CD4-positive, alpha-beta memory T cell (primary cell): ENCODE measurements at regions of chr5 and their contacts with region 1.

Region 1: DNA sequence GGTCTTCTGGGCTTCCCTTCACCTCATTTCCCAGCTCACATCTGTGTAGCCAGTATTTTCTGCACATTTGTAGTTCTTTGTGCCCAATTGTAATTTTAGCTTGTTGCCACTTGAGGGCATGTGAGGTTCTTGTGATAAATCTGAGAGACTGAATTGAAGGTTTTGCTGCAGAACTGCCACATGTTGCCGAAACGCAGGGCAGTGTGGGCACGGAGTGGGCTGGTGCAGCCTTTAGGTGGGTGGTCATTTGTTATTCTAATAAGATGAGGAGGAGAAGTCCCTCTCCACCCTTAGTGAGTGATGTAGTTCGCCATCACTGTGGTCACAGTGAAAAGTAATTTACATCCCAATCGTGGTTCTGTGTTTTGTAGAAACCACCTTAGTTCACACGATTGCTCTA is 21.2 kb downstream of the OTULIN start:
- DNase-seq: peak; percentile 52 to 63 (median 57)
- H3K4me3 ChIP-seq: no peak overlapping the region
- H3K4me3 Mint-ChIP-seq: peak overlapping the region; percentile 38 to 86 (median 67)
- H3K27ac ChIP-seq: no peak overlapping the region
- H3K27ac Mint-ChIP-seq: peak overlapping the region in 6 of 7 donors; percentile 8 to 97 (median 64)
- H3K4me1 ChIP-seq: peaks cover 7% of the 10 kb centered on the region
- H3K4me1 Mint-ChIP-seq: peaks cover 7 to 12% (median 11%) of the 10 kb centered on the region in 4 donors
- H3K27me3 ChIP-seq: no peaks in the 10 kb centered on the region
- H3K27me3 Mint-ChIP-seq: no peaks in the 10 kb centered on the region

Region 2: GRCh38 chr5:14491015-14491915 is 194.5 kb before region 1 on chr5:
- CTCF ChIA-PET with region 1: no interaction called
- POLR2A ChIA-PET with region 1: no interaction called
- intact Hi-C with region 1: no loop called
- DNase-seq: no peak
- H3K4me3 ChIP-seq: no peak overlapping the region
- H3K4me3 Mint-ChIP-seq: no peak overlapping the region
- H3K27ac ChIP-seq: no peak overlapping the region
- H3K27ac Mint-ChIP-seq: no peak overlapping the region
- H3K4me1 ChIP-seq: no peaks in the 10 kb centered on the region
- H3K4me1 Mint-ChIP-seq: no peaks in the 10 kb centered on the region
- H3K27me3 ChIP-seq: no peaks in the 10 kb centered on the region
- H3K27me3 Mint-ChIP-seq: no peaks in the 10 kb centered on the region

Region 3: DNA sequence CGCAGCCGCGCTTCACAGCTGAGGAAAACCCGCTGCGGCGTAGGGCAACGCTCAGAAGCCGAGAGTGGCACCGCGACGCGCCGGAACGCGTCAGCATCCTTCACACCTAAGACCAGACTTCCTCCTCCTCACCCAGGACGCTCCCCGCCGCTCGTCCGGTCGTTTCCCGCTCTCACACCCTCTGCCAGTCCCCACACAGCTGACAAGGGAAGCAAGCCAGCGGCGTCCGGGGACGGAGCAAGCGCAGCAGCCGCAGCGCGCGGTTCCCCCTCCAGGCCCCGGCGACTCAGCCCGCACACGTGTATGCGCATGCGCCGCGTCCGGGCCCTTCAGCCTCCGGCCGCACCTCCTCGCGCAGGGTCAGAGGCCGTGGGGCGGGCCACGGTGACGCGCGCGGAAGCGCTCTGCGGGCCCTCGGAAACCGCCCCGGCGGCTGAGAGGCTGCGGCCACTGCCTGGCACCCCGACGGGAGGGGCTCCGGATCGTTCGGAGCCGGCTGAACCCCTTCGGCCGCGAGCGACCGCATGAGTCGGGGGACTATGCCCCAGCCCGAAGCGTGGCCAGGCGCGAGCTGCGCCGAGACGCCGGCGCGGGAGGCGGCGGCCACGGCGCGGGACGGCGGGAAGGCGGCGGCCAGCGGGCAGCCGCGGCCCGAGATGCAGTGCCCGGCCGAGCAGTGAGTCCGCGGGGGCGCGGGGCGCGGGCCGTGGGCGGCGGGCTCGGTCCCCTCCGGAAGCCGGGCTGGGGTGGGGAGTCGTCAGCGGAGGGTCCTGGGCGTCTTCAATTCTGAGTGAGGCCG is 21.3 kb before region 1 on chr5 and contains the start of gene OTULIN:
- CTCF ChIA-PET with region 1: interaction called, 15 read pairs
- POLR2A ChIA-PET with region 1: interaction called, 5 read pairs
- intact Hi-C with region 1: no loop called
- DNase-seq: peak; percentile 82 to 92 (median 84)
- H3K4me3 ChIP-seq: peak within 1 kb of the TSS; percentile 54 to 80
- H3K4me3 Mint-ChIP-seq: peak within 1 kb of the TSS; percentile 94 to 98 (median 96)
- H3K27ac ChIP-seq: peak within 1 kb of the TSS; percentile 81
- H3K27ac Mint-ChIP-seq: peak within 1 kb of the TSS; percentile 89 to 99 (median 96)
- H3K4me1 ChIP-seq: peaks cover 61% of the 10 kb centered on the region
- H3K4me1 Mint-ChIP-seq: peaks cover 44 to 76% (median 56%) of the 10 kb centered on the region in 4 donors
- H3K27me3 ChIP-seq: no peaks in the 10 kb centered on the region
- H3K27me3 Mint-ChIP-seq: no peaks in the 10 kb centered on the region
- total RNA-seq, gene OTULIN: 59.4 to 69.0 TPM

Region 4: DNA sequence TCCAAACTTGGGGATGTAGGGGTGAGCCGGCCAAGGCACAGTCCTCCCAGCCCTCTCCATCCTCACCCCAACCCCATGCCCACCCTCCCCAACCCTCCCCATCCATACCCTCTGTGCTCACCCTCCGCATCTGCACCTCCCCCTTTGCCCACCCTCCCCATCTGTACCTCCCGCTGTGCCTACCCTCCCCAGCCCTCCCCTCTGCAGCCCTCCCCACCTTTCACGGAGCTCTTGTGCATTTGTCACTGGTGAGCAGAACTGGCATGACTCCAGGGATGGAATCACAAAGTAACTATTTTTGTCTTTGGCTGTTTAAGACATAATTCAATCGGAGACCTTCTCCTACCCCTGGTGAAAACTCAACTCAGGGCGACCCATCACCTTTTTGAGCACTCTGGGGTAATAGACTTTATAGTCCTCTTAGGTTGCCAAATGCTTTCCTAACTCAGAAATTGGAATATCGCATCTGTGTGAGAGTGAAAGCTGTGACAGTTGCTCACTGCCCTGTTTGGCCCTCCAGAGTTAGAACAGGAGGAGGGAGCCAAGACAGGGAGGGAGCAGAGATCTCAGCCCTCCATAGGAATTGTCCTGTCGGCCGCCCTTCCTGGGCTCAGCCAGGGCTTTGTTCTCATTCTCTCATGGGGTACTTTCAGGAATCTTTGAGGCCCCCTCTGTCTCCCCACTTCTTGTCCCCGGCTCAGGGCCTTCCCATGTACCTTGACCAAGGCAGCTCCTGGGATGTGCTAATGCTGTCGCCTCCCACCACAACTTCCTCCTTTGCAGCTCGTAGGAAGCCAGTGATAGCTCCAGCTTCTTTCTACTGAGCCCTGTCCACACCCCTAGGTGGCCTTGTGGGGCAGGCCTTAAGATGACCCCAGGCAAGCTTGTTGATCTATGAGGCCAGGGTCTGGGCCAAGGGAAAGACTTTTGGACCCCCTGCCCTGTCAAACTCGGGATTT is 15.0 kb after region 1 on chr5:
- CTCF ChIA-PET with region 1: interaction called, 114 read pairs
- POLR2A ChIA-PET with region 1: interaction called, 3 read pairs
- intact Hi-C with region 1: no loop called
- DNase-seq: no peak
- H3K4me3 ChIP-seq: no peak overlapping the region
- H3K4me3 Mint-ChIP-seq: peak overlapping the region in 4 of 8 donors; percentile 12 to 54 (median 35)
- H3K27ac ChIP-seq: peak overlapping the region; percentile 7
- H3K27ac Mint-ChIP-seq: peak overlapping the region; percentile 79 to 99 (median 94)
- H3K4me1 ChIP-seq: peaks cover 59% of the 10 kb centered on the region
- H3K4me1 Mint-ChIP-seq: peaks cover 53 to 91% (median 63%) of the 10 kb centered on the region in 4 donors
- H3K27me3 ChIP-seq: no peaks in the 10 kb centered on the region
- H3K27me3 Mint-ChIP-seq: no peaks in the 10 kb centered on the region

Region 5: DNA sequence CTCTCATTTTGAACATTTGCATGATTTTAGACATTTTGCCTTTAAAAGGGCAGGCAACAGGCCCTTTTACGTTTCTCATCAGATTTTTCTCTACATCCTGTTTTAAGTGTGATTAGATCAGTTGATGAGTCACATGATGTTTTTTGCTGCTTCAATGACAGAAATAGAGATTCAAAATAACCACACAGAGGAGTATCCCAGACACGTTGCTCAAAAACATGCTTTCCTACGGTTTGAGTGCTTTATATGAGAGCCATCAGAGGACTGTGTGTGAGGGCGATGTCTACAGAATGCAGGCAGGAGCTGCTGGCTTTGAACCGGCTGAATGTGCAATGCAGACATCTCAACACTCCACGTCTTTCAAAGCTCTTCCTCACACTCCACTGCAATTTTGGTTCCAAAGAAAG is 20.9 kb after region 1 on chr5:
- CTCF ChIA-PET with region 1: interaction called, 114 read pairs
- POLR2A ChIA-PET with region 1: interaction called, 12 read pairs
- intact Hi-C with region 1: loop called (anchors 1 kb)
- DNase-seq: peak; percentile 67 to 80 (median 73)
- H3K4me3 ChIP-seq: peak overlapping the region in 1 of 2 donors; percentile 26
- H3K4me3 Mint-ChIP-seq: peak overlapping the region; percentile 81 to 90 (median 82)
- H3K27ac ChIP-seq: peak overlapping the region; percentile 49
- H3K27ac Mint-ChIP-seq: peak overlapping the region; percentile 94 to 99 (median 99)
- H3K4me1 ChIP-seq: peaks cover 76% of the 10 kb centered on the region
- H3K4me1 Mint-ChIP-seq: peaks cover 66 to 91% (median 80%) of the 10 kb centered on the region in 4 donors
- H3K27me3 ChIP-seq: no peaks in the 10 kb centered on the region
- H3K27me3 Mint-ChIP-seq: no peaks in the 10 kb centered on the region

Region 6: GRCh38 chr5:14720236-14720971 is 34.6 kb after region 1 on chr5:
- CTCF ChIA-PET with region 1: interaction called, 96 read pairs
- POLR2A ChIA-PET with region 1: interaction called, 6 read pairs
- intact Hi-C with region 1: no loop called
- DNase-seq: no peak
- H3K4me3 ChIP-seq: no peak overlapping the region
- H3K4me3 Mint-ChIP-seq: no peak overlapping the region
- H3K27ac ChIP-seq: no peak overlapping the region
- H3K27ac Mint-ChIP-seq: peak overlapping the region; percentile 41 to 84 (median 68)
- H3K4me1 ChIP-seq: peaks cover 14% of the 10 kb centered on the region
- H3K4me1 Mint-ChIP-seq: peaks cover 15 to 37% (median 22%) of the 10 kb centered on the region in 4 donors
- H3K27me3 ChIP-seq: no peaks in the 10 kb centered on the region
- H3K27me3 Mint-ChIP-seq: no peaks in the 10 kb centered on the region

Region 7: DNA sequence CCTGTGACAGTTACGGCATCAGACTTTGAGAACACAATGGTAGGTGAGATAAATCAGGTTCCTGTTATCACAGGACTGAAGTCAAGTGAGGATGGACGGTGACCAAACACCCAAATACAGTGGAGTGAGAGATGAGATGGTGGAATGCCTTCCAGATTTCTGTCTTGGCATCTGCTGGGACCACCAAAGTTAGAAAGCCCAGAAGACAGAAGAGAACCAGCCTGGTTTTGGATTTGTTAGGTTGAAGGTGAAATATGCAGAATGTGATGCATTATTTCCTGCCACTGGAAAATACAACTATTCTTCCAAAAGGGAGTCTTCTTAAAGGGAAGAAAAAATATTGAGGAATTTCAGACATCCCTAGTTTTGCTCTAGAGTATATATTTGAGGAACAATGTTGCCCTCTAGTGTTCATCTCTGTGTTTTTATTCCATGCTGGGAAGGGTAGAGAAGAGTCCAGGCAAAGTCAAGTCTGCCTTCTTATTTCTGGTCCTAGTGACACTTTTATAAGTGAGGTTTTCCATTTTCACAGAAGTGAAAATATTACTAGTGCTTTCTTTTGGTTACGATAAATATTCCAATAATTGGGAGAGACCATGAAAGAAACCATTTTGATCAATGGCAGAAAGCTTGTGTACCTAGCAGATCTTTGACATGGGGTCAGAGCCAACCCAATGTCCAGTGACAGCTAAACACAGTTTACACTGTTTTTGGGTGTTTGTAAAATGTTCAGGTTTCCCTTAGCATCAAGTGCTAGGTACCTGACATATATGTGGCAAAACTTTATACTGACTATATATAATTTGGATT is 328.1 kb after region 1 on chr5:
- CTCF ChIA-PET with region 1: interaction called, 5 read pairs
- POLR2A ChIA-PET with region 1: interaction called, 3 read pairs
- intact Hi-C with region 1: loop called (anchors 1 kb)
- DNase-seq: peak in 4 of 5 donors; percentile 19 to 36 (median 28)
- H3K4me3 ChIP-seq: no peak overlapping the region
- H3K4me3 Mint-ChIP-seq: no peak overlapping the region
- H3K27ac ChIP-seq: no peak overlapping the region
- H3K27ac Mint-ChIP-seq: no peak overlapping the region
- H3K4me1 ChIP-seq: no peaks in the 10 kb centered on the region
- H3K4me1 Mint-ChIP-seq: no peaks in the 10 kb centered on the region
- H3K27me3 ChIP-seq: no peaks in the 10 kb centered on the region
- H3K27me3 Mint-ChIP-seq: peaks cover 0 to under 1% of the 10 kb centered on the region in 2 donors